BJ (cell line): ENCODE measurements at regions of chr12 and their contacts with region 1.

Region 1: GRCh38 chr12:91355150-91356006 is 172.8 kb upstream of the DCN start:
- DNase-seq: no peak
- H3K4me3 ChIP-seq: no peak overlapping the region
- H3K27me3 ChIP-seq: no peaks in the 10 kb centered on the region
- CTCF ChIP-seq: peak; percentile 91

Region 2: GRCh38 chr12:90959538-90960139 is 395.7 kb before region 1 on chr12:
- CTCF ChIA-PET with region 1: interaction called, 21 read pairs
- POLR2A ChIA-PET with region 1: no interaction called
- DNase-seq: no peak
- H3K4me3 ChIP-seq: no peak overlapping the region
- H3K27me3 ChIP-seq: no peaks in the 10 kb centered on the region
- CTCF ChIP-seq: peak; percentile 78

Region 3: DNA sequence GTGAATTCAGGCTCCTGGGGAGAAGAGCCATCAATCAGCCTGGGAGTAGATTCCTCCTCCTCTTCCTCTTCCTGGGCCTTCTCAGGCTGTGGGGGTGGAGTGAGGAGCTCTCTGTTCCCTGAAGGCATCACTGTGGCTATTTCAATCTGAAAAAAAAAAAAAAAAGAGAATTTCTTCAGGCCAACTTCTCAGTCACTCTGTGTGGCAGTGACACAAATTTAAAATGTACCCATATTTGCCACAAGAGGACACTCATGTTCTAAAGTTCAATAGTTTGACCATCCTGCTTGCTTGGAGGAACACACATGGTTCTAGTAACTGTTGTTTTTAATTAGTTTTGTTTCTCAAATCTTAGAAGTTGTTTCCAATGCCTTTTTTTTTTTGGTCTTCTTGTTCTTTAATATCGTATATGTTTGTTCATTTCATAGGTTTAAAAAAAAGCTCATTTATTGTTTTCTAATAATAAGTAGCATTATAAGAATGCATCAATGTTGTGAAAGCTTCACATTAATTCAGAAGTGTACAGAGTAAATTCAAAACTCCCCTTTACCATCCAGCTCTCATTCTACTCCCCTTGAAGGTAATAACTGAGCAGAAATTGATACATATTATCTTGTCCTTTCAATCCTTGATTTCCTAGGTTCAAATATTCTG is 377.1 kb before region 1 on chr12:
- CTCF ChIA-PET with region 1: interaction called, 36 read pairs
- POLR2A ChIA-PET with region 1: no interaction called
- DNase-seq: peak; percentile 46
- H3K4me3 ChIP-seq: no peak overlapping the region
- H3K27me3 ChIP-seq: no peaks in the 10 kb centered on the region
- CTCF ChIP-seq: peak; percentile 75

Region 4: GRCh38 chr12:91178139-91178561 is 177.2 kb before region 1 on chr12:
- CTCF ChIA-PET with region 1: interaction called, 35 read pairs
- POLR2A ChIA-PET with region 1: no interaction called
- DNase-seq: no peak
- H3K4me3 ChIP-seq: peak overlapping the region; percentile 35
- H3K27me3 ChIP-seq: no peaks in the 10 kb centered on the region
- CTCF ChIP-seq: peak; percentile 67

Region 5: GRCh38 chr12:91249518-91250272 is 105.7 kb before region 1 on chr12:
- CTCF ChIA-PET with region 1: interaction called, 10 read pairs
- POLR2A ChIA-PET with region 1: no interaction called
- DNase-seq: peak; percentile 60
- H3K4me3 ChIP-seq: no peak overlapping the region
- H3K27me3 ChIP-seq: no peaks in the 10 kb centered on the region
- CTCF ChIP-seq: no peak